ENCODE measurements at regions of chr3 and their contacts with region 1.

Region 1: GRCh38 chr3:160565442-160566403 is at the start of gene KPNA4:
- DNase-seq: peak; percentile 99
- H3K4me3 ChIP-seq: peak within 1 kb of the TSS; percentile 65 to 92 (median 74)
- H3K27ac ChIP-seq: peak within 1 kb of the TSS; percentile 91 to 99 (median 99)
- H3K4me1 ChIP-seq: peaks cover 18 to 69% (median 50%) of the 10 kb centered on the region in 6 donors
- H3K27me3 ChIP-seq: no peaks in the 10 kb centered on the region
- CTCF ChIP-seq: no peak
- POLR2A ChIP-seq: peak in 2 of 3 donors; percentile 33 to 63
- total RNA-seq, gene KPNA4: 34.4 to 50.6 (median 43.9) TPM

Region 2: DNA sequence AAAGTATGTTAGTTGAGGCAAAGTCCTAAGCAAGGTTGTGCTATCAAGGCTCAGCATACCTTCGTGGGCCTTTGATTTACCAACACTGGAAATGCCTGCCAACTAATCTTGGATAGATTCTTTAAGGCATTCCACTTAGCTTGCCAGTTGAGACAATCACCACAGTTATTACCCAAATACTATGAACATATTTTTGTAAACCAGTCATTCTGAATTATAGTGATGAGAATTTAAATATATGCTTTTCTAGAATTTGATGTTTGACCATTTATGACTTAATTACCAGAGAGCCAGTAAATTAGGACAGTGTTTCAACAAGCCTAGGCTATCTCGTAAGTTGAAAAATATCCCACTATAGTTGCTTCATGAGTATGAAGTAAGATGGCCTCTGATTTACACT is 131.7 kb before region 1 on chr3:
- intact Hi-C with region 1: no loop called
- DNase-seq: no peak
- H3K4me3 ChIP-seq: no peak overlapping the region
- H3K27ac ChIP-seq: no peak overlapping the region
- H3K4me1 ChIP-seq: peaks cover 0 to 6% (median 0%) of the 10 kb centered on the region in 6 donors
- H3K27me3 ChIP-seq: no peaks in the 10 kb centered on the region
- CTCF ChIP-seq: no peak
- POLR2A ChIP-seq: no peak

Region 3: DNA sequence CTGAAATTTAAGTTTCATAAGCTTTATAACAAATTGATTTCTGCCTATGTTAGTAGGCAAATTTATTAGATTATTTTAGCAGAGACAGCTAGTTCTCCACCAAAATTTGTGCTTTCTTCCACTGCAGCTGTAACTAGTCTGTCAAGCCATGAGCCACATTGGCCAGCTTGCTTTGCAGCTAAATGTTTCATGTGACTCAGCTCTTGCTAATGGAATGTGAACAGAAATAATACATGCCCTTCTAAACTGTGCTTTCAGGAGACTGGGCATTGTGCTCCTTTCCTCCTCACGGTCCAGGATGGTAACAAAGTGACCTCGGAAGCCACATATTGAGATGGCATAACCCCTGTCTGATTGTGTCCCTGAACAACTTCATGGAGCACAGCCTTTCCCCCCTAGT is 51.0 kb after region 1 on chr3:
- intact Hi-C with region 1: no loop called
- DNase-seq: no peak
- H3K4me3 ChIP-seq: no peak overlapping the region
- H3K27ac ChIP-seq: no peak overlapping the region
- H3K4me1 ChIP-seq: no peaks in the 10 kb centered on the region
- H3K27me3 ChIP-seq: peaks cover 0 to 14% (median 0%) of the 10 kb centered on the region in 7 donors
- CTCF ChIP-seq: no peak
- POLR2A ChIP-seq: no peak

Region 4: GRCh38 chr3:160754855-160755747 is 189.4 kb after region 1 on chr3:
- intact Hi-C with region 1: loop called (anchors 10 kb)
- DNase-seq: peak; percentile 98
- H3K4me3 ChIP-seq: peak overlapping the region; percentile 60 to 87 (median 74)
- H3K27ac ChIP-seq: peak overlapping the region; percentile 83 to 94 (median 92)
- H3K4me1 ChIP-seq: peaks cover 9 to 55% (median 27%) of the 10 kb centered on the region in 6 donors
- H3K27me3 ChIP-seq: peaks cover 0 to 12% (median 0%) of the 10 kb centered on the region in 7 donors
- CTCF ChIP-seq: no peak
- POLR2A ChIP-seq: peak; percentile 35 to 74 (median 65)

Region 5: DNA sequence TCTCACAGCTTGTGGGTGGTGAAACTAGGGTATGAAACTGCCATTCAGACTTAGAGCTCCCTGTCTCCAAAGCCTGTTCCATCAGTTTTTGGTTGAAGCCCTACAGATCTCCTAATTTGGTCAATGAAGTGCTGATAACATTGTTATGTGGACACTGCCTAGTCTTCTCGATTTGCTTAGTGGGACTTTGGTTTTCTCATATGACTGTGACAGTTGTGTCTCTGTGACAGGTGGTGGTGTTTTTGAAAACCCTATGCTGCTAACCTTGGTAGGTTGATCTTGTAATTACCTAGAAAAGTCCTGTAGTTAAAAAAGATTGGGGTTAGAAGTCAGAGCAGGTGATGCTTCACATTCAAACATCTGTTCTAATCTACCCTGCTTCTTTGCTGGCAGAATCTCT is 199.5 kb after region 1 on chr3:
- intact Hi-C with region 1: no loop called
- DNase-seq: no peak
- H3K4me3 ChIP-seq: no peak overlapping the region
- H3K27ac ChIP-seq: no peak overlapping the region
- H3K4me1 ChIP-seq: no peaks in the 10 kb centered on the region
- H3K27me3 ChIP-seq: no peaks in the 10 kb centered on the region
- CTCF ChIP-seq: no peak
- POLR2A ChIP-seq: no peak

Region 6: GRCh38 chr3:160841455-160841854 is 275.7 kb after region 1 on chr3:
- intact Hi-C with region 1: no loop called
- DNase-seq: no peak
- H3K4me3 ChIP-seq: no peak overlapping the region
- H3K27ac ChIP-seq: no peak overlapping the region
- H3K4me1 ChIP-seq: peaks cover 0 to 8% (median 0%) of the 10 kb centered on the region in 6 donors
- H3K27me3 ChIP-seq: no peaks in the 10 kb centered on the region
- CTCF ChIP-seq: no peak
- POLR2A ChIP-seq: no peak